ENCODE measurements at regions of chr1 and their contacts with region 1.

Region 1: GRCh38 chr1:186212544-186213226 is 162.4 kb downstream of the TPR start:
- DNase-seq: peak in 3 of 9 experiments; percentile 9 to 57 (median 39)
- ATAC-seq: no peak
- H3K4me3 ChIP-seq: no peak overlapping the region
- H3K4me3 Mint-ChIP-seq: no peak overlapping the region
- H3K27ac ChIP-seq: no peak overlapping the region
- H3K27ac Mint-ChIP-seq: no peak overlapping the region
- H3K4me1 ChIP-seq: no peaks in the 10 kb centered on the region
- H3K4me1 Mint-ChIP-seq: no peaks in the 10 kb centered on the region
- H3K27me3 ChIP-seq: peaks cover 0 to 4% of the 10 kb centered on the region in 2 experiments
- H3K27me3 Mint-ChIP-seq: peaks cover 45% of the 10 kb centered on the region
- CTCF ChIP-seq: no peak

Region 2: GRCh38 chr1:185813401-185813979 is 399.2 kb before region 1 on chr1:
- CTCF ChIA-PET with region 1: no interaction called
- POLR2A ChIA-PET with region 1: no interaction called
- intact Hi-C with region 1: loop called in 1 of 2 experiments (anchors 2 kb)
- DNase-seq: peak in 2 of 9 experiments; percentile 3 to 24
- ATAC-seq: no peak
- H3K4me3 ChIP-seq: no peak overlapping the region
- H3K4me3 Mint-ChIP-seq: no peak overlapping the region
- H3K27ac ChIP-seq: no peak overlapping the region
- H3K27ac Mint-ChIP-seq: no peak overlapping the region
- H3K4me1 ChIP-seq: no peaks in the 10 kb centered on the region
- H3K4me1 Mint-ChIP-seq: no peaks in the 10 kb centered on the region
- H3K27me3 ChIP-seq: no peaks in the 10 kb centered on the region
- H3K27me3 Mint-ChIP-seq: peaks cover 3% of the 10 kb centered on the region
- CTCF ChIP-seq: no peak

Region 3: DNA sequence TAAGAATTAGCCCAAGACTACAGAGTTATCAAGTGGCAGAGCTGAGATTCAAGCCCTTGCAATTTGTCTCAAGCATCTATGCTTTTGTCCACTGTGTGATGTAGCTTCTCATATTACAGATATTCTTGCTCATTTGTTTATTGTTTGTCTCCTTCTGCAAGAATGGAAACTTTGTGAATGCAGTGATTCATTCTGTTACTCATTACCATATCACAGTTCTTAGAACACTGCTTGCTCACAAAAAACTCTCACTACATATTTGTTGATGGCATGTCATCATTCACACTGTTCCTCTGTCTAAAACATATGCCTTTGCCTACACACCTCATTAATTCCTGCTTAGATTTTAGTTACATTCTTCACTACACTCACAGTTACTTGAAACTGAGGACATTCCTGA is 1814.9 kb after region 1 on chr1:
- CTCF ChIA-PET with region 1: no interaction called
- POLR2A ChIA-PET with region 1: no interaction called
- intact Hi-C with region 1: no loop called
- DNase-seq: no peak
- ATAC-seq: no peak
- H3K4me3 ChIP-seq: no peak overlapping the region
- H3K4me3 Mint-ChIP-seq: no peak overlapping the region
- H3K27ac ChIP-seq: no peak overlapping the region
- H3K27ac Mint-ChIP-seq: no peak overlapping the region
- H3K4me1 ChIP-seq: no peaks in the 10 kb centered on the region
- H3K4me1 Mint-ChIP-seq: no peaks in the 10 kb centered on the region
- H3K27me3 ChIP-seq: no peaks in the 10 kb centered on the region
- H3K27me3 Mint-ChIP-seq: no peaks in the 10 kb centered on the region
- CTCF ChIP-seq: no peak

Measured in CD8-positive, alpha-beta T cell (primary cell).